ENCODE measurements at regions of chr4 and their contacts with region 1.

Region 1: GRCh38 chr4:119628308-119629141 is at the start of gene PDE5A:
- DNase-seq: peak; percentile 80
- ATAC-seq: peak; percentile 56
- H3K4me3 ChIP-seq: peak within 1 kb of the TSS; percentile 93
- H3K27ac ChIP-seq: peak within 1 kb of the TSS; percentile 96
- H3K4me1 ChIP-seq: peaks cover 11% of the 10 kb centered on the region
- H3K27me3 ChIP-seq: no peaks in the 10 kb centered on the region
- CTCF ChIP-seq: peak; percentile 80
- POLR2A ChIP-seq: no peak
- RAD21 ChIP-seq: peak; percentile 90
- total RNA-seq, gene PDE5A: 567 and 770 TPM in 2 replicates

Region 2: GRCh38 chr4:119559044-119559647 is 69.4 kb before region 1 on chr4:
- CTCF ChIA-PET with region 1: interaction called, 3 read pairs
- POLR2A ChIA-PET with region 1: no interaction called
- dilution Hi-C with region 1: no loop called
- in situ Hi-C with region 1: no loop called
- intact Hi-C with region 1: loop called (anchors 2 kb)
- DNase-seq: peak; percentile 57
- ATAC-seq: 0 out of 2 replicates have a peak, but pooled peaks have one; percentile 8
- H3K4me3 ChIP-seq: no peak overlapping the region
- H3K27ac ChIP-seq: no peak overlapping the region
- H3K4me1 ChIP-seq: no peaks in the 10 kb centered on the region; the same call in 1 of the 2 replicates
- H3K27me3 ChIP-seq: no peaks in the 10 kb centered on the region
- CTCF ChIP-seq: peak; percentile 51
- POLR2A ChIP-seq: no peak
- RAD21 ChIP-seq: peak; percentile 59

Region 3: GRCh38 chr4:119683518-119683917 is 55.0 kb after region 1 on chr4:
- CTCF ChIA-PET with region 1: interaction called, 6 read pairs
- POLR2A ChIA-PET with region 1: interaction called, 13 read pairs
- dilution Hi-C with region 1: no loop called
- in situ Hi-C with region 1: no loop called
- intact Hi-C with region 1: loop called (anchors 2 kb)
- DNase-seq: peak; percentile 93
- ATAC-seq: peak; percentile 76
- H3K4me3 ChIP-seq: no peak overlapping the region
- H3K27ac ChIP-seq: peak overlapping the region; percentile 92
- H3K4me1 ChIP-seq: peaks cover 21% of the 10 kb centered on the region
- H3K27me3 ChIP-seq: no peaks in the 10 kb centered on the region
- CTCF ChIP-seq: no peak
- POLR2A ChIP-seq: no peak
- RAD21 ChIP-seq: no peak

Region 4: GRCh38 chr4:119735165-119735651 is 106.7 kb after region 1 on chr4:
- CTCF ChIA-PET with region 1: interaction called, 19 read pairs
- POLR2A ChIA-PET with region 1: interaction called, 47 read pairs
- dilution Hi-C with region 1: no loop called
- in situ Hi-C with region 1: no loop called
- intact Hi-C with region 1: loop called (anchors 1 kb)
- DNase-seq: peak; percentile 99
- ATAC-seq: peak; percentile 76
- H3K4me3 ChIP-seq: no peak overlapping the region
- H3K27ac ChIP-seq: no peak overlapping the region
- H3K4me1 ChIP-seq: peaks cover 32% of the 10 kb centered on the region
- H3K27me3 ChIP-seq: no peaks in the 10 kb centered on the region
- CTCF ChIP-seq: no peak
- POLR2A ChIP-seq: no peak
- RAD21 ChIP-seq: no peak; the same call in 1 of the 2 replicates

Region 5: DNA sequence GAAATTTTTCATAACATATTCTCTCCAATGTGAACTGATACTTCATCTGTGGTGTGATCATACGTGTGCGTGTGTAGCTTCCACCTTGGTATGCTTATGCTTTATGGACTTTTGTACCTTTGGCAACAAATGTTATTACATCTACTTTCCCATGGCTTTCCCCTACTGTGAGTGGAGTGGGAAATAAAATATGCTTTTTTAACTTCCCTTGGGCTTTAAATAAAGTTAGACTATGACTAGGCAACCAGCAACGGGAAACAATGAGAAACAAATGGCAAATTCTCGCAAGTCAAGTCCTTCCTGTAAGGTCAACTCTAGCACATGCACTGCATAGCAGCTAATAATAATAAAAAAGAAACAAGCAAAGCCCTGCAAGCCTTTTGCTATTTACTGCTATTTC is 205.1 kb after region 1 on chr4:
- CTCF ChIA-PET with region 1: no interaction called
- POLR2A ChIA-PET with region 1: interaction called, 9 read pairs
- dilution Hi-C with region 1: no loop called
- in situ Hi-C with region 1: no loop called
- intact Hi-C with region 1: loop called (anchors 10 kb)
- DNase-seq: no peak
- ATAC-seq: no peak
- H3K4me3 ChIP-seq: no peak overlapping the region
- H3K27ac ChIP-seq: no peak overlapping the region
- H3K4me1 ChIP-seq: peaks cover 6% of the 10 kb centered on the region
- H3K27me3 ChIP-seq: no peaks in the 10 kb centered on the region
- CTCF ChIP-seq: no peak
- POLR2A ChIP-seq: no peak
- RAD21 ChIP-seq: no peak

Region 6: GRCh38 chr4:119906277-119906676 is 277.8 kb after region 1 on chr4:
- CTCF ChIA-PET with region 1: no interaction called
- POLR2A ChIA-PET with region 1: no interaction called
- dilution Hi-C with region 1: no loop called
- in situ Hi-C with region 1: no loop called
- intact Hi-C with region 1: no loop called
- DNase-seq: no peak
- ATAC-seq: no peak
- H3K4me3 ChIP-seq: no peak overlapping the region
- H3K27ac ChIP-seq: no peak overlapping the region
- H3K4me1 ChIP-seq: no peaks in the 10 kb centered on the region
- H3K27me3 ChIP-seq: no peaks in the 10 kb centered on the region
- CTCF ChIP-seq: no peak
- POLR2A ChIP-seq: no peak
- RAD21 ChIP-seq: no peak

Region 7: DNA sequence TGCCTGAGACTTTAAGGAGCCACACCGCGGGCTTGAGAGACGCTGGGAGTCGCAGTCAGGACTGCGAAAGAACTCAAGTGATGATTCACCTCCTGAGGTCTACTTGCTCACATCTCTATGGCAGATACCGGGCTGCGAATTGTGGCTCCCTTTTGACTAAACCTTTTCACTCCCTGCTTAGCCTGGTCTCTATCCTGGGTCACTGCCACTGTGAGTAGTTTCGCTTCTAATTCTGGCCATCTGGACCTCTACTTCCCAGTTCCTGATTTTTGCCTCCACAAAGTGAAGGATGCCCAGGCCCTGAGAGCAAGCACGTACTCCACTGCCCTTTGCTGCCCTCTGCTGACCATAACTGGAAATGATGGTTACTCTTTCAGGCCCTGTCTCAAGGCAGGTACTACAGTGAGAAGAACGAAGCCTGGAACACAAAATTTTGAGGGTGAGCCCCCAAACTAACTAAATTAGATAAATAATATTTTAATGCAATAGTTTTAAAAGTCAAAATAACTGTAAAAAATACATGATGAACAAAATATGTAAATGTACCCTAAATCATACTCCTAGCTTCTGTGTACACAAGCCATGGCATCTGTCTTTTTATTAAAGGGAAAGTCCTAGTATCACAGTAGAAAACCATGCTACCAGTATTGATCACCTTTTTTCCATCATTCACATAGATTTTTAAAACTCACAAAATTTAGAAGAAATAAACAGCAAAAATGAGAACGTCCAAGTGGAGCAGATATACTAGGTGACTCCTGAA is 421.4 kb after region 1 on chr4:
- CTCF ChIA-PET with region 1: interaction called, 8 read pairs
- POLR2A ChIA-PET with region 1: interaction called, 10 read pairs
- dilution Hi-C with region 1: no loop called
- in situ Hi-C with region 1: loop called (anchors 5 kb)
- intact Hi-C with region 1: loop called (anchors 1 kb)
- DNase-seq: peak; percentile 92
- ATAC-seq: peak; percentile 84
- H3K4me3 ChIP-seq: peak overlapping the region; percentile 21; the same call in 1 of the 2 replicates
- H3K27ac ChIP-seq: peak overlapping the region; percentile 85
- H3K4me1 ChIP-seq: peaks cover 4% of the 10 kb centered on the region
- H3K27me3 ChIP-seq: no peaks in the 10 kb centered on the region
- CTCF ChIP-seq: peak; percentile 87
- POLR2A ChIP-seq: no peak
- RAD21 ChIP-seq: peak; percentile 95

Measured in IMR-90 (cell line).